ENCODE measurements at regions of chr10 and their contacts with region 1.

Region 1: GRCh38 chr10:73920089-73920488 is 9.2 kb downstream of the PLAU start:
- DNase-seq: no peak
- ATAC-seq: peak; percentile 31
- H3K4me3 ChIP-seq: no peak overlapping the region
- H3K27ac ChIP-seq: peak overlapping the region; percentile 36
- H3K4me1 ChIP-seq: peaks cover 34% of the 10 kb centered on the region
- H3K27me3 ChIP-seq: no peaks in the 10 kb centered on the region
- CTCF ChIP-seq: no peak

Region 2: DNA sequence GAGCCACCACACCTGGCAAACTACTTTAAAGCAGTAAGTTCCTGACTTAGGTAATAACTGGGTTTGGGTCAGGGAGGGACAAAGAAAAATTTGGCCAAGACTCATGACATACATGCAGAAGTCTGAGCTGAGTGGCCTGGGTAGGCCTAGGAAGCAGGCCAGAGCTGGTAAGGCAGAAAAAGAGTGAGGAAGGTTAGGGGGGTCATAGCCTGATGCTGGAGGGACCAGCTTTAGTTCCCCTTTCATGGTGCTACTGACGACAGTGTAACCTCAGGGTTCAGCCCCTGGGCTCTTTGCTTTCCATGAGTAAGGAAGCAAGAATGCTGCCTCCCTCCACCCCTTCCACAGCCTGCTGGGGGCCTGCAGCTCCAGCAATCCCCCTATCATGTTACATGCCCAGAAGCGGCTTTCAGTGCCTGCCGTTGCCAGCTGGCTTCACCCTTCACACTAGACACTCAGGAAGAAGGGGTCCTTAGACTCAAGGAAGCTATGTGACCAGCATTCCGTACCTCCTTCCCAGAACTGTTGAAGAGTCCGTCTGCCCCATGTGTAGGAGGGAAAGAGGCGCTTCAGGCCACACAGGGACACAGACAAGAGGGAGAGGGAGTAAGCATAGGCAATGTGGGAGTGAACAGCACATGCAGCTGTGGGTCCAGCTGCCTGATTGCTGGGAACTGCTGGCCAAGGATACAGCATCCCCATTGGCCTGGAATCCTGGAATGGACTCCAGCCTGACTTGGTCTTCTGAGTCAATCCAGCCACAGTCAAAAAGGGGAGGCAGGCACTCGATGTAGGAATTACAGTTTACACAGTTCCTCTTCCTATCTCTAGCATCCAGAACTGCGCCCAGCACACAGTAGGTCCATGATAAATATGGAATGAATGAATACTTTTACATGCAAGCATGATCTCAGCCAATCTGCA is 13.3 kb before region 1 on chr10:
- CTCF ChIA-PET with region 1: interaction called, 11 read pairs
- POLR2A ChIA-PET with region 1: interaction called, 5 read pairs
- in situ Hi-C with region 1: no loop called
- intact Hi-C with region 1: no loop called
- DNase-seq: no peak
- ATAC-seq: peak; percentile 60
- H3K4me3 ChIP-seq: 0 out of 4 replicates have a peak overlapping the region, but pooled peaks of 1 of the 2 experiments have one; percentile 3
- H3K27ac ChIP-seq: peak overlapping the region; percentile 97
- H3K4me1 ChIP-seq: peaks cover 51% of the 10 kb centered on the region
- H3K27me3 ChIP-seq: no peaks in the 10 kb centered on the region
- CTCF ChIP-seq: no peak

Region 3: DNA sequence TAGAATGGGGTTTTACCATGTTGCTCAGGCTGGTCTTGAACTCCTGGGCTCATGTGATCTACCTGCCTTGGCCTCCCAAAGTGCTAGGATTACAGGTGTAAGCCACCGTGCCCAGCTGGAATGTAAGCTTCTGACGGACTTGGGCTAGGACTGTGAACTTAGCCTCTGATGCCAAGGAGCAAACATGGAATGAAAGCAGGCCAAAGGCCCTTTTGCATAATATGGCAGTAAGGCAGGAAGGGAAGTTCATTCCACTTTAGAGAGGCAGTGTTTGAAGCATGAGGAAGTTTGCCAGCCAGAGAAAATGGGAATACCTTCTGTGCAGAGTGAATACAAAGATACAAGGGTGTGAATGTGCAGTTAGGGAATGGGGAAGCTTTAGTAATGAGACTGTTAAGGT is 98.2 kb after region 1 on chr10:
- CTCF ChIA-PET with region 1: no interaction called
- POLR2A ChIA-PET with region 1: interaction called, 23 read pairs
- in situ Hi-C with region 1: no loop called
- intact Hi-C with region 1: no loop called
- DNase-seq: no peak
- ATAC-seq: no peak
- H3K4me3 ChIP-seq: no peak overlapping the region
- H3K27ac ChIP-seq: peak overlapping the region; percentile 32
- H3K4me1 ChIP-seq: peaks cover 42% of the 10 kb centered on the region
- H3K27me3 ChIP-seq: no peaks in the 10 kb centered on the region
- CTCF ChIP-seq: no peak

Measured in Panc1 (cell line).